Activated CD4-positive, alpha-beta memory T cell treated with anti-CD3 and anti-CD28 coated beads for 36 hours (primary cell): ENCODE measurements at regions of chr4 and their contacts with region 1.

Region 1: GRCh38 chr4:54322818-54323417 is 93.8 kb downstream of the PDGFRA start:
- DNase-seq: peak; percentile 63
- H3K4me3 Mint-ChIP-seq: no peak overlapping the region
- H3K27ac Mint-ChIP-seq: no peak overlapping the region
- H3K4me1 Mint-ChIP-seq: no peaks in the 10 kb centered on the region
- H3K27me3 Mint-ChIP-seq: no peaks in the 10 kb centered on the region

Region 2: GRCh38 chr4:54440394-54441136 is 117.6 kb after region 1 on chr4:
- CTCF ChIA-PET with region 1: interaction called, 8 read pairs
- POLR2A ChIA-PET with region 1: no interaction called
- intact Hi-C with region 1: loop called (anchors 2 kb)
- DNase-seq: no peak
- H3K4me3 Mint-ChIP-seq: no peak overlapping the region
- H3K27ac Mint-ChIP-seq: no peak overlapping the region
- H3K4me1 Mint-ChIP-seq: no peaks in the 10 kb centered on the region
- H3K27me3 Mint-ChIP-seq: peaks cover 11% of the 10 kb centered on the region

Region 3: DNA sequence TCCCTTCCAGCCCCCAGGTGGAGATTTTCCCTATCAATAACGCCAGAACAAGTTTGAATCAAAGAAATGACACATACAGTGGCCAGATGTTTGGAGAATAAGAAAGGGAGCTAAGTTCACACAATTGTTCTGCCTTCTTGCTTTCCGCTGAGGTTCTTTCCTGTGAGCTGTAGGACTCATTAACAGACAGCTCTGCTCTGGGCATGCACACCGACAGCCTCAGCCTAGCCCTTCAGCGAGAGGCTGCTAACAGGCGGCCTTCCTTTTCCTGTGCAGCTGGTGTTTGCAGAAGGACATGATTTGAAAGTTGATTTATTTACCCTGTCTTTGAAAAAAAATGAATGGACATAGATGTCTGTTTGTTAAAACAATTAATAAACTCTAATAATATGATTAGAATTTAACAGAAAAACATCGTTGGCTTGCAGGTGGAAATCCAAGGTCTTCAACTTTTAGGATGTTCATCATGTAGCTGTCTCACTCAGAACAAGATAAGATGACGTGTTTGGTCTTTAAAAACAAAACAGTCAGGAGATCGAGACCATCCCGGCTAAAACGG is 619.2 kb after region 1 on chr4:
- CTCF ChIA-PET with region 1: no interaction called
- POLR2A ChIA-PET with region 1: no interaction called
- intact Hi-C with region 1: loop called (anchors 10 kb)
- DNase-seq: peak; percentile 58
- H3K4me3 Mint-ChIP-seq: peak overlapping the region; percentile 47
- H3K27ac Mint-ChIP-seq: peak overlapping the region; percentile 72
- H3K4me1 Mint-ChIP-seq: peaks cover 44% of the 10 kb centered on the region
- H3K27me3 Mint-ChIP-seq: no peaks in the 10 kb centered on the region

Region 4: DNA sequence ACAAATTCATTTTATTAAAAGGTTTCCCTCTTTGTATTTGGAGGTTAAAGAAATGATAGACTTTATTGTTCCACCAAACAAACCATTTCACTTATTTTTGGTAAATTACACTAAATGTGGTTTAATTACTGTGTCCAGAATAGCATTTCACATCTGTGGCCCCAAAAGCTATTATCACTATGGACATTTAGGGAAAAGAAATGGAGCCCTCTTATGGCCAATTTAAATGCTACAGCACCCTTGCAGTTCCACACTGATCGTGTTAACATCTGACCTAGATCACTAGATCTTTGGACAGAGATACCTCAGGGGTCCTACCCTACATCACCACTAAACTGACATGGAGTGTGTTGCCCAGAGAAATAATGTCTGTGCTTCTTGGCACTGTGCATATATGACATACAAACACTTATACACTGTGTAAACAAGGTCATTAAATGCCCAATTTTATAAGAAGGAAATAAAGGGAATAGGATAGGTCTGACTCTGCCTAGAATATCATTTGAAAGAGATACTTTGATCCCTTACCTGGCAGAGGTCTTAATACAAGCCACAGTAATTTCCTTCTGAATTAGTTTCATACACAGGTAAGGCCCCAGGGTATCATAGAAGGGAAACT is 638.5 kb after region 1 on chr4:
- CTCF ChIA-PET with region 1: interaction called, 4 read pairs
- POLR2A ChIA-PET with region 1: no interaction called
- intact Hi-C with region 1: loop called (anchors 2 kb)
- DNase-seq: no peak
- H3K4me3 Mint-ChIP-seq: no peak overlapping the region
- H3K27ac Mint-ChIP-seq: no peak overlapping the region
- H3K4me1 Mint-ChIP-seq: peaks cover 16% of the 10 kb centered on the region
- H3K27me3 Mint-ChIP-seq: no peaks in the 10 kb centered on the region

Region 5: DNA sequence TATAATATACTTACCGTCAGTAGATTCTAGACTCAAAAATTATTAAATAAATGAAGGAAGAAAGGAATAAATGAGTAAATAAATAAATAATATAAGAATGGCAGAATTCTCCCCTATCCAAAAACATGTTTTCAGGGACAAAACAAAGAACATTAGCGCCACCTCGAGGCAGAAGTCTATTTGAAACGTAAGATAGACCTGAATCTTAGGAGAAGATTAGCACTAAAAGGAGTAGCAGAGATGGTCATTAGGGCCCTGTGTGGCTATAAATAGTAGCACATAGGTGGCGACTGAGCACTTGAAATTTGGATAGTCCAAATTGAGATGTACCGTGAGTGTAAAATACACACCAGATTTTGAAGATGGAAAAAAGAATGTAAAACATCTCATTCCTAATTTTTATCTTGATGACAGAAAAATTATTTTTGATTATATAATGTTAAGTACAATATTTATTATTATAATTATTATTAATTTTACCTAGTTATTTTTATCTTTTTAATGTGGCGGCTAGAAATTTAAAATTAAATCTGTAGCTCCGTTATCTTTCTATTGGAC is 998.9 kb after region 1 on chr4:
- CTCF ChIA-PET with region 1: no interaction called
- POLR2A ChIA-PET with region 1: no interaction called
- intact Hi-C with region 1: loop called (anchors 2 kb)
- DNase-seq: peak; percentile 72
- H3K4me3 Mint-ChIP-seq: no peak overlapping the region
- H3K27ac Mint-ChIP-seq: no peak overlapping the region
- H3K4me1 Mint-ChIP-seq: peaks cover 29% of the 10 kb centered on the region
- H3K27me3 Mint-ChIP-seq: peaks cover 2% of the 10 kb centered on the region